Dendritic cell treated with granulocyte-macrophage colony-stimulating factor and Interleukin-4, amounts not matched to agents 40 ng/mL and 50 ng/mL, for 4 days (primary cell): ENCODE measurements at regions of chr1 and their contacts with region 1.

Region 1: GRCh38 chr1:226109829-226110248 is 47.3 kb downstream of the H3-3A start:
- H3K4me3 Mint-ChIP-seq: peak overlapping the region; percentile 82
- H3K27ac Mint-ChIP-seq: peak overlapping the region; percentile 96
- H3K4me1 Mint-ChIP-seq: peaks cover 35% of the 10 kb centered on the region
- H3K27me3 Mint-ChIP-seq: peaks cover 9% of the 10 kb centered on the region

Region 2: GRCh38 chr1:226083302-226084101 is 26.3 kb before region 1 on chr1:
- intact Hi-C with region 1: loop called (anchors 2 kb)
- H3K4me3 Mint-ChIP-seq: peak overlapping the region; percentile 90
- H3K27ac Mint-ChIP-seq: peak overlapping the region; percentile 84
- H3K4me1 Mint-ChIP-seq: peaks cover 10% of the 10 kb centered on the region
- H3K27me3 Mint-ChIP-seq: peaks cover 23% of the 10 kb centered on the region